ENCODE measurements at regions of chr11 and their contacts with region 1.

Region 1: DNA sequence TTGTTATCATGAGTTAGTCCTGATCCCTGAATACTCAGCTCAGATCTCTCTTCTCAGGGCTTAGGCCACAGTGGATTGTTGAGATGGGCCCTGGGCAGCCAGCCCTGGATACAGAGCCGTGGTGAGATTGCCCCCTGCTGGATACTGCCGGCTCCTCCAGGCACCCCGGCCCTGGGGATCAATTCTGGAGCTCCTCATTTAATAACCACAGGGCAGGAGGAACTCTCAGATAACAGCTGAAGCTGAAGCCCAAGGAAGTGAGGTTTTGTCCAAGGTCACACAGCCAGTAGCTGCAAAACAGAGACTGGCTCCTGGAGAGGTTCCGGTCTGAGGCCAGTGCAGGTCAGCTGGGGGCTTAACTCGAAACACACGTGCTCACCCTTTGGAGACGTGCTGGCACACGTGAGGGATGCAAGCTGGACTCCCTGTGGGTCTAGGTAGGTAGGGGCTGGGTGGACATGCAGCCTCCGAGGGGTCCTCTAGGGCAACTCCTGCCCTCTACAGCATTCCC is 16.0 kb downstream of the USH1C start:
- DNase-seq: peak; percentile 22 to 56
- ATAC-seq: peak in 2 of 3 donors; percentile 57 to 70
- H3K4me3 ChIP-seq: no peak overlapping the region
- H3K4me3 Mint-ChIP-seq: no peak overlapping the region
- H3K27ac ChIP-seq: no peak overlapping the region
- H3K27ac Mint-ChIP-seq: no peak overlapping the region
- H3K4me1 ChIP-seq: no peaks in the 10 kb centered on the region
- H3K4me1 Mint-ChIP-seq: no peaks in the 10 kb centered on the region
- H3K27me3 ChIP-seq: no peaks in the 10 kb centered on the region
- H3K27me3 Mint-ChIP-seq: peaks cover 5 to 7% of the 10 kb centered on the region in 2 donors
- CTCF ChIP-seq: peak; percentile 26

Region 2: DNA sequence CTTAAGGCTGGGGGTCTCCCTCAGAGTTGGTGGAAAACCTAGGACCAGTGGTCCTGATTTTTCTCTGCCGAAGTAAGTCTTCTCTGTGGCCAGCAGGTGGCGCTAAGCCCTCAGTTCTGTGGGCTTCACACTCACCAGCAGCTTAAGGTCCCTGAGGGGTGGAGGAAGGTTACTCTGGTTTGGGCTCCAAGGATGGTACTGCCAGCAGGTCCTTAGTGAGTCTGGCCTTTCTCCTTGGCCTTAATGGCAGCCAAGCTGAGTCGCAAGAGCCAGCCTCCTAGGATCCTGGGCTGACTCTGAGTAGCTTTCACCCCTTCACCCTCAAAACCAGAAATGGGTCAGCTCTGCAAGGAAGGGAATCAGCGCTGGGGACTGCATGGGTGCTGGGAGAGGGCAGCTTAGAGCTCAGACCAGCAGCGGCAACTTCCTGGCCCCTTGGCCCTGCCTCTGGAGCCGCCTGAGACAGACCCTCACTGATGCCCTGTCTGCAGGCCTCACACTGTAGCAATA is 144.2 kb before region 1 on chr11:
- intact Hi-C with region 1: loop called (anchors 1 kb)
- DNase-seq: peak; percentile 72 to 92
- ATAC-seq: peak; percentile 64 to 79 (median 77)
- H3K4me3 ChIP-seq: no peak overlapping the region
- H3K4me3 Mint-ChIP-seq: no peak overlapping the region
- H3K27ac ChIP-seq: no peak overlapping the region
- H3K27ac Mint-ChIP-seq: no peak overlapping the region
- H3K4me1 ChIP-seq: peaks cover 5% of the 10 kb centered on the region
- H3K4me1 Mint-ChIP-seq: peaks cover 9 to 11% of the 10 kb centered on the region in 2 donors
- H3K27me3 ChIP-seq: no peaks in the 10 kb centered on the region
- H3K27me3 Mint-ChIP-seq: no peaks in the 10 kb centered on the region
- CTCF ChIP-seq: peak; percentile 97

Region 3: GRCh38 chr11:17827006-17827405 is 298.8 kb after region 1 on chr11:
- intact Hi-C with region 1: no loop called
- DNase-seq: no peak
- ATAC-seq: no peak
- H3K4me3 ChIP-seq: no peak overlapping the region
- H3K4me3 Mint-ChIP-seq: no peak overlapping the region
- H3K27ac ChIP-seq: no peak overlapping the region
- H3K27ac Mint-ChIP-seq: no peak overlapping the region
- H3K4me1 ChIP-seq: no peaks in the 10 kb centered on the region
- H3K4me1 Mint-ChIP-seq: no peaks in the 10 kb centered on the region
- H3K27me3 ChIP-seq: no peaks in the 10 kb centered on the region
- H3K27me3 Mint-ChIP-seq: no peaks in the 10 kb centered on the region
- CTCF ChIP-seq: no peak

Measured in natural killer cell (primary cell).